Tibial artery (tissue), 4 donors: ENCODE measurements at regions of chr17 and their contacts with region 1.

Region 1: DNA sequence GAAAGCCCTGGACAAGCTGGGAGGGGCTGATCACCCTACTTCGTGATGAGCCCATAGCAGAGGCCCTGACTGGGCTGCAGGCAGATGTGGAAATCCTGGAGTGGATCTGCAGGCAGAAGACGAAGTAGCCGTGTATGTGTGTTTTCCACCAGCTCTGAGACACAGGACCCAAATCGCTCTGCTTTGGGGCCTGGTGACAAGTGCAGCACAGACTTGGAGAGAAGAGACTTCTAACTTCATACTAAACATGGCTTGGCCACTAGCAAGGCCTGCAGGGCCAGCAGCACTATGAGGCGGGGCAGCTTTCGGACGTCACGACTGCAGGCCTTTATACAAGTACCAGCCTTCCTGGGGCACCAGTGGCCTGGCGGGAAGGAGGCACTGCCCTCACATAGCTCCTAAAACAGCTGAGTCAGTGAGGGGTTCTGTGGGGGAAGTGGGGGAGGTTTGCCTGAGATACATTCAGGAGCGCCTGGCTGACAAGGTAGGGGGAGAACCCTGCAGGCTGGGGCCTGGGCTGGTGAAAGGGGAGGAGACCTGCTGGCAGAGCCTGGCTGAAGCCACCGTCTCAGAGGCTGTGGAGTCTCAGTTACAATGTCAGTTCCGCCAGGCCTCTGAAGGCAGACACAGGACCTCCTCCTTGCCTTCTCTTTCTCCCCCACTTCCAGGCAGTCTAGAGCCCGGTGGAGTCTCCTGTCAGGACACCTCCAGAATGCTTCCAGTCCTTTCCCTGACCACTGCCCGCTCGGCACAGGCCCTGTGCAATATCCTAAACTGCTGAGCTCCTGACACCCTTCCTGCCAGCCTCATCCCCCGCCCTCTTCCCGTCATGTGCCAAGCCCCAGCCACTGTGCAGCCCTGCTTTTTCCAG is 73.4 kb downstream of the WSB1 start:
- DNase-seq: peak in 1 of 2 donors; percentile 62
- H3K4me3 ChIP-seq: no peak overlapping the region
- H3K27ac ChIP-seq: no peak overlapping the region
- H3K4me1 ChIP-seq: peaks cover 0 to 17% (median 8%) of the 10 kb centered on the region in 4 donors
- H3K27me3 ChIP-seq: no peaks in the 10 kb centered on the region
- CTCF ChIP-seq: no peak

Region 2: DNA sequence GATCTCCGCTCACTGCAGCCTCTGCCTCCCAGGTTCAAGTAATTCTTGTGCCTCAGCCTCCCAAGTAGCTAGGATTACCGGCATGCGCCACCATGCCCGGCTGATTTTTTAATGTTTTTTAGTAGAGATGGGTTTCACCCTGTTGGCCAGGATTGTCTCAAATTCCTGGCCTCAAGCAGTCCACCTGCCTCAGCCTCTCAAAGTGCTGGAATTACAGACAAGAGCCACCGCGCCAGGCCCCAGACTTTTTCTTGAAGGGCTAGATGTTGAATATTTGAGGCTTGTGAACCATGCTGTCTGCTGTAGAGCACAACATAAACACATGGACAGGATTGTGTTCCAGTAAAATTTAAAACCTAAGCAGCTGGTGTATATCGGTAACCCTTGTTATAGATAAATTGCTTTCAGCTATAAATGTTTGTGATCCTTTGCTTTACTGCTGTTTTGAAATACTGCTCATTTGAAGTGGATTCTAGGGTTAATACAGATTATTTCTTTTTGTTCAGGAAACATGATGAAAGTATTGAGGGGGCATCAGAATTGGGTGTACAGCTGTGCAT is 61.0 kb before region 1 on chr17:
- intact Hi-C with region 1: no loop called
- DNase-seq: no peak
- H3K4me3 ChIP-seq: no peak overlapping the region
- H3K27ac ChIP-seq: peak overlapping the region in 1 of 2 donors; percentile 23
- H3K4me1 ChIP-seq: peaks cover 0 to 75% (median 16%) of the 10 kb centered on the region in 4 donors
- H3K27me3 ChIP-seq: no peaks in the 10 kb centered on the region
- CTCF ChIP-seq: no peak

Region 3: GRCh38 chr17:27353461-27354050 is 13.8 kb before region 1 on chr17:
- intact Hi-C with region 1: no loop called
- DNase-seq: peak; percentile 90 to 97
- H3K4me3 ChIP-seq: peak overlapping the region; percentile 67 to 87
- H3K27ac ChIP-seq: peak overlapping the region; percentile 96 to 97
- H3K4me1 ChIP-seq: peaks cover 0 to 23% (median 16%) of the 10 kb centered on the region in 4 donors
- H3K27me3 ChIP-seq: no peaks in the 10 kb centered on the region
- CTCF ChIP-seq: peak; percentile 95 to 99

Region 4: GRCh38 chr17:27381007-27381501 is 13.7 kb after region 1 on chr17:
- intact Hi-C with region 1: loop called (anchors 2 kb)
- DNase-seq: peak; percentile 40 to 77
- H3K4me3 ChIP-seq: no peak overlapping the region
- H3K27ac ChIP-seq: peak overlapping the region in 1 of 2 donors; percentile 60
- H3K4me1 ChIP-seq: peaks cover 0 to 39% (median 25%) of the 10 kb centered on the region in 4 donors
- H3K27me3 ChIP-seq: no peaks in the 10 kb centered on the region
- CTCF ChIP-seq: peak; percentile 76 to 84

Region 5: GRCh38 chr17:27413315-27413714 is 46.0 kb after region 1 on chr17:
- intact Hi-C with region 1: no loop called
- DNase-seq: no peak
- H3K4me3 ChIP-seq: no peak overlapping the region
- H3K27ac ChIP-seq: no peak overlapping the region
- H3K4me1 ChIP-seq: peaks cover 0 to 7% (median 6%) of the 10 kb centered on the region in 4 donors
- H3K27me3 ChIP-seq: no peaks in the 10 kb centered on the region
- CTCF ChIP-seq: no peak

Region 6: DNA sequence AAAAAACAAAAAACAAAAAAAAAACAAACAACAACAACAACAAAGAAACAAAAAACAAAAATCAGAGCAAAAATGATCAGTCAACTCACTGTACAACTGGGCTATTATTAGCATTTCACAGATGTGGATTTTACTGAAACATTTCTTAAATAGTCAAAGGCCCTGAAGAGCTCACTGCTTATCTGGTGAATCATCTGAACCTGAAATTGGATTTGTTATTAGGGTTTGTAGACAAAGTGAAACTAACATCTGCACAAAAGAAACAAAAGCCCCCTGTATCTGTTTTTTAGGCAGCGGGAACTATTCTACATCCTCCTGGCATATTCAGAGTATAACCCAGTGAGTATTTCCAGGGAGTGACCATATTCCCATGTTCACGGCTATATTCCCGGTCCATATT is 56.3 kb after region 1 on chr17:
- intact Hi-C with region 1: loop called (anchors 10 kb)
- DNase-seq: no peak
- H3K4me3 ChIP-seq: no peak overlapping the region
- H3K27ac ChIP-seq: no peak overlapping the region
- H3K4me1 ChIP-seq: no peaks in the 10 kb centered on the region
- H3K27me3 ChIP-seq: no peaks in the 10 kb centered on the region
- CTCF ChIP-seq: no peak